Activated naive CD8-positive, alpha-beta T cell treated with anti-CD3 and anti-CD28 coated beads, Interleukin-2, amount 10 ng/mL, durations not matched to agents 7 days and 5 days (primary cell): ENCODE measurements at regions of chr1 and their contacts with region 1.

Region 1: GRCh38 chr1:161038523-161039153 is at the start of gene TSTD1:
- DNase-seq: peak; percentile 88
- ATAC-seq: peak; percentile 88
- H3K4me3 Mint-ChIP-seq: peak within 1 kb of the TSS; percentile 93
- H3K27ac Mint-ChIP-seq: peak within 1 kb of the TSS; percentile 90
- H3K4me1 Mint-ChIP-seq: peaks cover 32% of the 10 kb centered on the region
- H3K27me3 Mint-ChIP-seq: no peaks in the 10 kb centered on the region
- total RNA-seq, gene TSTD1: 81.7 to 84.9 TPM

Region 2: GRCh38 chr1:161013488-161014230 is 25.0 kb before region 1 on chr1:
- POLR2A ChIA-PET with region 1: interaction called, 23 read pairs
- DNase-seq: peak; percentile 66
- ATAC-seq: peak; percentile 92
- H3K4me3 Mint-ChIP-seq: peak overlapping the region; percentile 79
- H3K27ac Mint-ChIP-seq: peak overlapping the region; percentile 87
- H3K4me1 Mint-ChIP-seq: peaks cover 26% of the 10 kb centered on the region
- H3K27me3 Mint-ChIP-seq: no peaks in the 10 kb centered on the region

Region 3: GRCh38 chr1:161021165-161021960 is 17.3 kb before region 1 on chr1:
- POLR2A ChIA-PET with region 1: interaction called, 32 read pairs
- DNase-seq: peak; percentile 84
- ATAC-seq: peak; percentile 95
- H3K4me3 Mint-ChIP-seq: peak overlapping the region; percentile 97
- H3K27ac Mint-ChIP-seq: peak overlapping the region; percentile 79
- H3K4me1 Mint-ChIP-seq: peaks cover 29% of the 10 kb centered on the region
- H3K27me3 Mint-ChIP-seq: no peaks in the 10 kb centered on the region

Region 4: GRCh38 chr1:161054232-161054631 is 15.6 kb after region 1 on chr1:
- POLR2A ChIA-PET with region 1: no interaction called
- DNase-seq: no peak
- ATAC-seq: no peak
- H3K4me3 Mint-ChIP-seq: no peak overlapping the region
- H3K27ac Mint-ChIP-seq: peak overlapping the region; percentile 49
- H3K4me1 Mint-ChIP-seq: peaks cover 22% of the 10 kb centered on the region
- H3K27me3 Mint-ChIP-seq: no peaks in the 10 kb centered on the region

Region 5: GRCh38 chr1:161359291-161359690 is 320.7 kb after region 1 on chr1:
- POLR2A ChIA-PET with region 1: no interaction called
- DNase-seq: no peak
- ATAC-seq: no peak
- H3K4me3 Mint-ChIP-seq: no peak overlapping the region
- H3K27ac Mint-ChIP-seq: peak overlapping the region; percentile 35
- H3K4me1 Mint-ChIP-seq: peaks cover 8% of the 10 kb centered on the region
- H3K27me3 Mint-ChIP-seq: no peaks in the 10 kb centered on the region